CD4-positive, alpha-beta T cell (primary cell): ENCODE measurements at regions of chr4 and their contacts with region 1.

Region 1: GRCh38 chr4:89226665-89227574 is 80.7 kb downstream of the GPRIN3 start:
- DNase-seq: peak; percentile 62 to 88 (median 72)
- ATAC-seq: peak; percentile 94
- H3K4me3 ChIP-seq: no peak overlapping the region
- H3K4me3 Mint-ChIP-seq: peak overlapping the region; percentile 18
- H3K27ac ChIP-seq: no peak overlapping the region
- H3K27ac Mint-ChIP-seq: no peak overlapping the region
- H3K4me1 ChIP-seq: no peaks in the 10 kb centered on the region
- H3K4me1 Mint-ChIP-seq: peaks cover 5% of the 10 kb centered on the region
- H3K27me3 ChIP-seq: no peaks in the 10 kb centered on the region
- H3K27me3 Mint-ChIP-seq: no peaks in the 10 kb centered on the region
- CTCF ChIP-seq: peak; percentile 91

Region 2: GRCh38 chr4:89242864-89243732 is 16.2 kb after region 1 on chr4:
- CTCF ChIA-PET with region 1: interaction called, 12 read pairs
- POLR2A ChIA-PET with region 1: no interaction called
- intact Hi-C with region 1: no loop called
- DNase-seq: peak in 3 of 14 experiments; percentile 19 to 88 (median 82)
- ATAC-seq: peak; percentile 92
- H3K4me3 ChIP-seq: no peak overlapping the region
- H3K4me3 Mint-ChIP-seq: peak overlapping the region; percentile 9
- H3K27ac ChIP-seq: peak overlapping the region in 1 of 2 donors; percentile 25
- H3K27ac Mint-ChIP-seq: peak overlapping the region; percentile 84
- H3K4me1 ChIP-seq: peaks cover 21% of the 10 kb centered on the region
- H3K4me1 Mint-ChIP-seq: peaks cover 70% of the 10 kb centered on the region
- H3K27me3 ChIP-seq: no peaks in the 10 kb centered on the region
- H3K27me3 Mint-ChIP-seq: no peaks in the 10 kb centered on the region
- CTCF ChIP-seq: no peak

Region 3: GRCh38 chr4:90099812-90100211 is 872.9 kb after region 1 on chr4:
- CTCF ChIA-PET with region 1: no interaction called
- POLR2A ChIA-PET with region 1: no interaction called
- intact Hi-C with region 1: no loop called
- DNase-seq: peak in 3 of 14 experiments; percentile 2 to 54 (median 46)
- ATAC-seq: no peak
- H3K4me3 ChIP-seq: no peak overlapping the region
- H3K4me3 Mint-ChIP-seq: no peak overlapping the region
- H3K27ac ChIP-seq: no peak overlapping the region
- H3K27ac Mint-ChIP-seq: no peak overlapping the region
- H3K4me1 ChIP-seq: no peaks in the 10 kb centered on the region
- H3K4me1 Mint-ChIP-seq: no peaks in the 10 kb centered on the region
- H3K27me3 ChIP-seq: no peaks in the 10 kb centered on the region
- H3K27me3 Mint-ChIP-seq: no peaks in the 10 kb centered on the region
- CTCF ChIP-seq: no peak